ENCODE measurements at regions of chr3 and their contacts with region 1.

Region 1: GRCh38 chr3:166296179-166296783 is 459.1 kb upstream of the BCHE start:
- DNase-seq: no peak
- ATAC-seq: no peak
- H3K4me3 ChIP-seq: no peak overlapping the region
- H3K4me3 Mint-ChIP-seq: no peak overlapping the region
- H3K27ac ChIP-seq: no peak overlapping the region
- H3K27ac Mint-ChIP-seq: no peak overlapping the region
- H3K4me1 ChIP-seq: no peaks in the 10 kb centered on the region
- H3K4me1 Mint-ChIP-seq: no peaks in the 10 kb centered on the region
- H3K27me3 ChIP-seq: no peaks in the 10 kb centered on the region
- H3K27me3 Mint-ChIP-seq: no peaks in the 10 kb centered on the region
- CTCF ChIP-seq: no peak

Region 2: GRCh38 chr3:166367947-166368522 is 71.8 kb after region 1 on chr3:
- CTCF ChIA-PET with region 1: no interaction called
- POLR2A ChIA-PET with region 1: no interaction called
- intact Hi-C with region 1: no loop called
- DNase-seq: no peak
- ATAC-seq: no peak
- H3K4me3 ChIP-seq: no peak overlapping the region
- H3K4me3 Mint-ChIP-seq: no peak overlapping the region
- H3K27ac ChIP-seq: no peak overlapping the region
- H3K27ac Mint-ChIP-seq: no peak overlapping the region
- H3K4me1 ChIP-seq: no peaks in the 10 kb centered on the region
- H3K4me1 Mint-ChIP-seq: no peaks in the 10 kb centered on the region
- H3K27me3 ChIP-seq: no peaks in the 10 kb centered on the region
- H3K27me3 Mint-ChIP-seq: no peaks in the 10 kb centered on the region
- CTCF ChIP-seq: no peak

Region 3: DNA sequence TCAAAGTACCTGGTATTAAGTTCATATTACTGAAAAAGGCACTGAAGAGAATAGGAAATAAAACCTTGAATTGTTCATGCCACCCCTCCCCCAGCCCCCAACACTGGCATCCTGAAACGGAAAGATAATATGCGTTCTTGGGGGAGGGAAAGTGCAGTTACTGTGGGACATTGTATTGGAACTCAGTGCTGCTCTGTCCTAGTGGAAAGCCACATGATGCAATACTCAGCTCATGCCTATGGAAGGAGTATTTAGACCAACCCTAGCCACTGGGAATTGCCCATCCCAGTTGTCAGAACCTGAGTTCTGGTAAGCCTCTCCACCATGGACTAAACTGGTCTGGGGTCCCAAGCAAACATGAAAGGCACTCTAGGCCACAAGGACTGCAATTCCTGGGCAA is 221.8 kb after region 1 on chr3:
- CTCF ChIA-PET with region 1: no interaction called
- POLR2A ChIA-PET with region 1: no interaction called
- intact Hi-C with region 1: loop called in 1 of 2 experiments (anchors 5 kb)
- DNase-seq: no peak
- ATAC-seq: no peak
- H3K4me3 ChIP-seq: no peak overlapping the region
- H3K4me3 Mint-ChIP-seq: no peak overlapping the region
- H3K27ac ChIP-seq: no peak overlapping the region
- H3K27ac Mint-ChIP-seq: no peak overlapping the region
- H3K4me1 ChIP-seq: no peaks in the 10 kb centered on the region
- H3K4me1 Mint-ChIP-seq: no peaks in the 10 kb centered on the region
- H3K27me3 ChIP-seq: no peaks in the 10 kb centered on the region
- H3K27me3 Mint-ChIP-seq: no peaks in the 10 kb centered on the region
- CTCF ChIP-seq: no peak